G401 (cell line): ENCODE measurements at regions of chr19 and their contacts with region 1.

Region 1: GRCh38 chr19:55516878-55517620 is 19.9 kb downstream of the SBK2 start:
- DNase-seq: peak; percentile 96

Region 2: DNA sequence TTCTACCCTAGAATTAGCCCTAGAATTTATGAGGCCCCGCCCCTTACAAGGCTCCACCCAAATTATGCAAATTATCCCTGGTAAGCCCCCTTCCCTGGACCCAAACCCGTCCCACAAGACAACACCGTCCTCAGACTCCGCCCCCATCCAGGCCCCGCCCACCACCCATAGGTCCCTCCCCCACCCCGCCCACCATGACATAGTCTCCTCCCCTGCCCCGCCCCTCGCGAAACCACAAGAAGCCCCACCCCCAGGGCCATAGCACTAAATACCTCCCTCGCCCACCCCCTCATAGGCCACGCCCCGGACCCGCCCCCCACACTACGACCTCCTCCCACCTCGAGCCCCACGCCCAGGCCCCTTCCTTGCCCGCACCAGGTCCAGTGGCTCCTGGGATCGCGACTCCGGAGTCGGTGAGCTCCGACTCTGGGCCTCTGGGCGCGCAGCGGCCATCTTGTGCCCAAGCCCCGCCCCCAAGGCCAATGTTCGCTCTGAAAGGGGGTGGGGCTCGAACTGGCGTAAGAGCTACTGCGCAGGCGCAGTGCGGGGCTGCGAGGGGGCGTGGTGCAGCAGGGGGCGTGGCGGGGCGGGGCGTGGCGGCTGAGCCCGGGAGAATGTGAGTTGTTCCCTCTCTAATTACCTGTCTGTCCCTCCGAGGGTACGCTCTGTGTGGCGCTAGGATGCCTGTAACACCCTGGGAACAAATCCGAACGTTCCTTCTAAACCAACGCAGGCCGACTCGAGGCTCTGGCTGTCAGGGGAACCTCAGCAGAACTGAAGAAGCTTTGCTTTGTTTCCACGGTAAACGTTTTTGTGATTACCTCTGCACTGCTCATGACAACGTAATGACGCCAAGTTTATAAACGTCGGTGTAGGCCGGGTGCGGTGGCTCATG is 107.3 kb after region 1 on chr19 and contains the start of gene ZNF784:
- in situ Hi-C with region 1: loop called (anchors 5 kb)
- DNase-seq: peak; percentile 94
- total RNA-seq, gene ZNF784: 6.8 and 21.0 TPM in 2 replicates